KBM-7 (cell line): ENCODE measurements at regions of chr6 and their contacts with region 1.

Region 1: DNA sequence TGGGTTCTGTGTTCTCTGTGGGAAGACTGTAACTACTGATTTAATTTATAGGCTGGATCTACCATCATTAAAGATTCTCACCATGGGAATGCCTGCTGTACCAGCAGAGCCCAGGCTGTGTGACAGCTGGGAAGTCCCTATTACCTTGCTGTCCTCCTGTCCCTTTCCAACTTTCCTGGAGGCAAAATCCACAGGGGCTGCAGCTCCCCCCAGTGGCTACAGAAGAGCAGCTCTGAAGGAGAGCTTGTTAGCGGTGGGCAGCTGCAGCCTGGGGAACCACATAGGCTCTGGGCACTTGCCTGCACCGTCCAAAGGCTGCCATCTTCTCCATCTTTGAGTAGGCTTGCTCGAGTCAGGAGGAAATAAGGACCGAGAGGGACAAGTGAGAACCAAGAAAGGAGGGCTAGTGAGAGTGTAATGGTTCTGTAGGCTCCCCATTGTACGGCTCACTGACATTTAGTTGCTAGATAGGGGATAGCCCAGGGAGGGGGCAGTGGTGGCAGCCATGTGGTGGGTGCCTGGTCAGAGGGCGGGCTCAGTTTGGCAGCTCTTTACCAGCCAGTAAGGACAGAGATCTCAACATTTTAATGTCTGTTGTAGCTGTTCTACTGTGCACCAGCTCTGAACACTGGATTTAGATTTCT is 155.1 kb upstream of the MLIP start:
- DNase-seq: peak; percentile 75

Region 2: GRCh38 chr6:53484476-53485280 is 471.5 kb before region 1 on chr6:
- in situ Hi-C with region 1: loop called (anchors 25 kb)
- DNase-seq: peak; percentile 79